Ascending aorta (tissue), 2 donors: ENCODE measurements at regions of chr1 and their contacts with region 1.

Region 1: DNA sequence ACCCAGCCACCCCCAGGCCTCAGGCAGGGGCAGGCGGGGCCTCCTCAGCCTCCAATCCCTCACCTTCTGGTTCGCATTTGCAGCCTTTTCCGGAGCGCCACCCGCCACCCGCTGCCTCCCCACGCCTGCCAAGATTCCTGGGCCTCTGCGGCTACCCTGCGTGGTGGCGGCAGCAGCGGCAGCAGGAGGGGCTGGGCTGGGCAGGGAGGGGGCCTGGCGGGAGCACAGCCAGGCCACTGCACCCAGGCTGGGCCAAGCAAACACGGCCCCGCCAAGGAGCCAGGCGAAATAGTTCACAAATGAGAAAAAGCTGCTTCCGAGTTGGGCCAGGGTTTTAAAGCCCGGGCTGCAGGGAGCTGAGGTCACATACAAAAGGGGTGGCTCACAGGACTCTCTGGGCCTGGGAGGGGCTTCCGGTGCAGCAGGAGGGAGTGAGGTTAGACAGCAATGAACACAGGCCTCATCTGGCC is 9.8 kb downstream of the COL8A2 start:
- DNase-seq: peak; percentile 45 to 89
- H3K4me3 ChIP-seq: peak overlapping the region in 1 of 2 donors; percentile 7
- H3K27ac ChIP-seq: peak overlapping the region; percentile 89 to 95
- H3K4me1 ChIP-seq: peaks cover 22 to 50% of the 10 kb centered on the region in 2 donors
- H3K27me3 ChIP-seq: no peaks in the 10 kb centered on the region
- CTCF ChIP-seq: no peak

Region 2: GRCh38 chr1:36051821-36052220 is 63.4 kb before region 1 on chr1:
- intact Hi-C with region 1: no loop called
- DNase-seq: no peak
- H3K4me3 ChIP-seq: no peak overlapping the region
- H3K27ac ChIP-seq: no peak overlapping the region
- H3K4me1 ChIP-seq: no peaks in the 10 kb centered on the region
- H3K27me3 ChIP-seq: no peaks in the 10 kb centered on the region
- CTCF ChIP-seq: no peak

Region 3: DNA sequence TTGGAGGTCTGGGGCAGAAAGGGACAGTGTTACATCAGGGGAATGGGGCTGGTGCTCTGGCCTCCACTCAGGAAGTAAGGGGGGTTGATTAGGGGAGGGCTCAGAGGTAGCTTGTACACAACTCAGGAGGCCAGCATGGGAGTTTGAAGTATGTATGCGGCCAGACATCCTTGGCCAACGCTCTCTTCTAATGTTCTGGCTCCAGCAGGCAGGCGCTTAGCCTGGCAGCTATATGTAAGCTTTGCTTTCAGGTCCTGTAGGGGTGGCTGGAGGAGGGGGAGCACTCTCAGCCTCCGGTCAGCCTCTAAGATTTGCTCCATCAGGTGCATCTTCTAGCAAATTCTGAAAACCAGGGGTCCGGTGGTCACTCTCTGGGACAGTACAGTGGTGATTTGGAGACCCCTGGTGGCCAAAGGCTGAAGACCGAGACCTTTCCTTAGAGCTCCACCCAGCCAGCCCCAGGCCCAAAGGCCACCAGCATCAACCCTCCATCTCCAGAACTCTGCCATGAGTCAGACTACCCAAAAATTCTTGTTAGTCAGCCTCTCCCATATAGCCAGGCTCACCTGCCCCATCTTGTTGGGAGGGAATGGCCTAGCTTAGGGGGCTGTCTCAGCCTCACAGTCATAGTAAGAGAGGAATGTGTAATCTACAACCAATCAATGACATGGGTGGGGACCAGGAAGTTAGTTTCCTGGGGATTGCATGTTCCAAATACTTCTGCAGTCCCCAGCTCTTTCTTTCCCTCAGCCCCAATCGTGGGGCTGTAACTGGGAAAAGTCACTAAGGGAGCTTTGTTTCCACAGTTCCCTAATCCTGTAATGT is 19.5 kb after region 1 on chr1:
- intact Hi-C with region 1: loop called (anchors 2 kb)
- DNase-seq: peak in 1 of 2 donors; percentile 81
- H3K4me3 ChIP-seq: no peak overlapping the region
- H3K27ac ChIP-seq: peak overlapping the region; percentile 85 to 91
- H3K4me1 ChIP-seq: peaks cover 8 to 28% of the 10 kb centered on the region in 2 donors
- H3K27me3 ChIP-seq: no peaks in the 10 kb centered on the region
- CTCF ChIP-seq: peak; percentile 75 to 85 (median 77)